ENCODE measurements at regions of chr16 and their contacts with region 1.

Region 1: GRCh38 chr16:11535471-11535870 is 51.2 kb downstream of the LITAF start:
- DNase-seq: no peak
- ATAC-seq: no peak
- H3K4me3 Mint-ChIP-seq: no peak overlapping the region
- H3K27ac Mint-ChIP-seq: no peak overlapping the region
- H3K4me1 Mint-ChIP-seq: peaks cover 5% of the 10 kb centered on the region
- H3K27me3 Mint-ChIP-seq: no peaks in the 10 kb centered on the region
- CTCF ChIP-seq: no peak

Region 2: GRCh38 chr16:10964039-10964890 is 571.2 kb before region 1 on chr16:
- CTCF ChIA-PET with region 1: interaction called, 15 read pairs
- POLR2A ChIA-PET with region 1: no interaction called
- intact Hi-C with region 1: no loop called
- DNase-seq: peak; percentile 85
- ATAC-seq: peak; percentile 47
- H3K4me3 Mint-ChIP-seq: no peak overlapping the region
- H3K27ac Mint-ChIP-seq: peak overlapping the region; percentile 92
- H3K4me1 Mint-ChIP-seq: peaks cover 42% of the 10 kb centered on the region
- H3K27me3 Mint-ChIP-seq: no peaks in the 10 kb centered on the region
- CTCF ChIP-seq: peak; percentile 99

Region 3: DNA sequence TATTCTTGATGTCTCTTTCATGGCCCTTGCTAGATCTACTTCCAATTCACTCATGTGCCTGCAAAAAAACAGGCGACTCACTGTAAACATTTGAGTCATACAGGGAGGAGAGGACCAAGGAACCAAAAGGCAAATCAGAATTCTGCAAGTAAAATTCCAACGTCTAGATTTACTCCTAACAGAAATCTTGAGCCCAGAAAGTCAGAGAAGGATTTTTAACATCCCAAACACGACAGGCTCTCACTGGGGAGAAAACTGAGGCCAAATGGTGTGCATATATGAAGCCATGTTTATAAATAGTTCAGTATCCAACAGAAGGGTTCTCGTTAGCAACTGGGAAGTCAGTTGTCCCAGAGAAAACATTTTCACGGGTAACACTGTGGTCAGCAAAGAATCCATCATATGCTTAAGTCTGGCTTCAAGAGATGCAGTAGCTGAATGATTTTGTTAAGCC is 11.2 kb after region 1 on chr16:
- CTCF ChIA-PET with region 1: interaction called, 10 read pairs
- POLR2A ChIA-PET with region 1: interaction called, 3 read pairs
- intact Hi-C with region 1: no loop called
- DNase-seq: no peak
- ATAC-seq: no peak
- H3K4me3 Mint-ChIP-seq: no peak overlapping the region
- H3K27ac Mint-ChIP-seq: peak overlapping the region; percentile 13
- H3K4me1 Mint-ChIP-seq: peaks cover 12% of the 10 kb centered on the region
- H3K27me3 Mint-ChIP-seq: no peaks in the 10 kb centered on the region
- CTCF ChIP-seq: no peak

Region 4: GRCh38 chr16:11560701-11561449 is 25.4 kb after region 1 on chr16:
- CTCF ChIA-PET with region 1: interaction called, 10 read pairs
- POLR2A ChIA-PET with region 1: no interaction called
- intact Hi-C with region 1: no loop called
- DNase-seq: peak; percentile 87
- ATAC-seq: peak; percentile 94
- H3K4me3 Mint-ChIP-seq: peak overlapping the region; percentile 73
- H3K27ac Mint-ChIP-seq: peak overlapping the region; percentile 96
- H3K4me1 Mint-ChIP-seq: peaks cover 75% of the 10 kb centered on the region
- H3K27me3 Mint-ChIP-seq: no peaks in the 10 kb centered on the region
- CTCF ChIP-seq: no peak

Region 5: DNA sequence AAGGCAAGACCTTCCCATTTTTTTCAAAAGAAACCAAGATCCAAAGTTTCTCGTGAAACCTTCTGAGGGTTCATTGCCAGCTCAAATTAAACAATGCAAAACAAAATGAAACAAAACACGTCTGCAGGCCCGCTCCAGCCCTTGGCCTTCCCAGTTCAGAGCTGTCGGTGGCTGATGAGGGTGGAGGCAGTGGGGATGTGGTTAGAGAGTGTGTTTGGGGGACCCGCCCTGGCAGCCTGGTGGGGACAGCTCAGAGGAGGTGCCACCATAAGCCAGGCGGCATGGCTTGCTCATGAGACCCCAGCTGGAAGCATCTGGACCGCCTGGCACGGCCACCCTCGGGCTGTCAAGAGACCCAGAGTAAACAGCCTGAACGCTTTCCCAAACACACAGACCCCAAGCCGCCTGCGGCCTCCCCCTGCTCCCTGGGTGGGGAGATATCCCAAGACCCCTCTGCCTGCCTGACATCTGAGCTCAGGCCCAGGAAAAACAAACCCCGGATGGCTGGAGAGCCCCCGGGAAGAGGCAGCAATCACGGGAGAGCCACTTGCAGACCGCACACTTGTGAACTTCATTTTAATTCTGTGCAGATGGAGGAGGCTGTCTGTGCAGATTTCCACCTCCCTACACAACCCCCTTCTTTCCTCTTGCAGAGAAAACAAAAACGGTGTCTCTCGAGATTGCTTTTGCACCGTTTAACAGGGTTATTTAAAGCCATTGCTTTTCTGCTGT is 86.6 kb after region 1 on chr16:
- CTCF ChIA-PET with region 1: interaction called, 11 read pairs
- POLR2A ChIA-PET with region 1: no interaction called
- intact Hi-C with region 1: no loop called
- DNase-seq: peak; percentile 68
- ATAC-seq: peak; percentile 77
- H3K4me3 Mint-ChIP-seq: peak overlapping the region; percentile 60
- H3K27ac Mint-ChIP-seq: peak overlapping the region; percentile 74
- H3K4me1 Mint-ChIP-seq: peaks cover 56% of the 10 kb centered on the region
- H3K27me3 Mint-ChIP-seq: no peaks in the 10 kb centered on the region
- CTCF ChIP-seq: no peak

Region 6: DNA sequence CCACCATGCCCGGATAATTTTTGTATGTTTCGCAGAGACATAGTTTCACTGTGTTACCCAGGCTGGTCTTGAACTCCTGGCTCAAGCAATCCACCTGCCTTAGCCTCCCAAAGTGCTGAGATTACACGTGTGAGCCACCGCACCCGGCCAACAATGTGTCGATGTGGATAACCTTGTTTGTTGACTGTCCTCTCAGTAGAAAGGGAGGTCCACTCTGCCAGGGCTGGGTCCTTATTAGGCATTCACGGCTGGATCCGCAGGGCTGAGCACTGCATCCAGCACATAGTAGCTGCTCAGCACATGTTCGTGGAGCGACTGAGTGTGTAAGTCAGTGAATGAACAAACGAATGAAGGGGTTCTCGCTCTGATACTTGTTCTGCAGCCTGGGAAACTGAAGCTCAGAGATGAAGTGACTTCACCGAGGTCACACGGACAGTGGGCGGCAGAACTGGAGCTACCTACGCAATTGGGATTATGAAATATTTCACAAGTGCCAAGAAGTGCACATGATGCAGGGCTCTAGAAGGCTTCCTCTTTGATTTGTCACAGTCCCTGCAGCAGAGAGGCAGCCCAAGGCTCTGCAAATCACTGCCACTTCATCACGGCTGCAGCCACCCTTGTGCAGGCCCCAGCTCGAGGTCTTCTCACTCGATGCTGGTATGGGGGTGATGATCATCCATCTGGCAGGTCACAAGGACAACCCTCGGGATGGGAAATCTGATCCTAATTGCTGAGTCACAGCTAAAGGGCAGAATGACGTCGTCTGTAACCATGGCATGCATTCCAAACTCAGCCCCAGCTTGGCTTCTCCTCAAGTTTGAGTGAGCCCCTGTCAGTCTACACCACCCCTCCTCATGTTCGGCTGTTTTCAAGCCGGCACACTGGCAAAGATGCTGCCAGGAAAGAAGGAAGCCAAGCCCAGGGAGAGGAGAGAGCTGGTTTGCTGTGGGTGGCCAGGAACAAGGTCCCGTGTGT is 104.7 kb after region 1 on chr16:
- CTCF ChIA-PET with region 1: interaction called, 82 read pairs
- POLR2A ChIA-PET with region 1: no interaction called
- intact Hi-C with region 1: loop called (anchors 5 kb)
- DNase-seq: no peak
- ATAC-seq: peak; percentile 21
- H3K4me3 Mint-ChIP-seq: no peak overlapping the region
- H3K27ac Mint-ChIP-seq: no peak overlapping the region
- H3K4me1 Mint-ChIP-seq: peaks cover 10% of the 10 kb centered on the region
- H3K27me3 Mint-ChIP-seq: no peaks in the 10 kb centered on the region
- CTCF ChIP-seq: no peak

Region 7: DNA sequence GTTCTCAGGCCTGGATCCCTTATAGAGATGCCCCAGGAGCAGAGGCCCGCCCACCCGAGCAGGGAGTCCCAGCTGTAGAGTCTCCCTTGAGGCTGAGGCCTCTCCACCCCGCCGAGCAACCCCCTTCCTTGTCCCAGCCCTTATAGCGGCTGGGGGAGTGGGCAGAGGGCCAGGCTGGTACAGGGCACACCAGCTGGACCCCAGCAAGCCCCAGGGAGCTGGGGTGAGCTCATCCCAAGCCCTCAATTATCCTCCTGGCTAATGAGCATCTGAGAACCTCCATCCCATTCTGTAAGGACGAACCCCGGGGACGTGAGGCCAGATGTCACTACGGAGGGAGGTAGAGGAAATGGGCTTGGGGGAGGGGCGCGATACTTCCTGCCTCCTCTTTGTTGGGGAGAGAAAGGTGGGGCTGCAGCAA is 129.6 kb after region 1 on chr16:
- CTCF ChIA-PET with region 1: interaction called, 12 read pairs
- POLR2A ChIA-PET with region 1: no interaction called
- intact Hi-C with region 1: no loop called
- DNase-seq: peak; percentile 63
- ATAC-seq: peak; percentile 3
- H3K4me3 Mint-ChIP-seq: peak overlapping the region; percentile 58
- H3K27ac Mint-ChIP-seq: peak overlapping the region; percentile 85
- H3K4me1 Mint-ChIP-seq: peaks cover 45% of the 10 kb centered on the region
- H3K27me3 Mint-ChIP-seq: no peaks in the 10 kb centered on the region
- CTCF ChIP-seq: no peak

Measured in activated CD8-positive, alpha-beta T cell treated with anti-CD3 and anti-CD28 coated beads for 36 hours (primary cell).